ENCODE measurements at regions of chr1 and their contacts with region 1.

Region 1: GRCh38 chr1:108617008-108617723 is 43.7 kb downstream of the HENMT1 start:
- DNase-seq: no peak
- ATAC-seq: no peak
- H3K4me3 ChIP-seq: no peak overlapping the region
- H3K4me3 Mint-ChIP-seq: no peak overlapping the region
- H3K27ac ChIP-seq: no peak overlapping the region
- H3K27ac Mint-ChIP-seq: no peak overlapping the region
- H3K4me1 ChIP-seq: no peaks in the 10 kb centered on the region
- H3K4me1 Mint-ChIP-seq: no peaks in the 10 kb centered on the region
- H3K27me3 ChIP-seq: no peaks in the 10 kb centered on the region
- H3K27me3 Mint-ChIP-seq: no peaks in the 10 kb centered on the region

Region 2: DNA sequence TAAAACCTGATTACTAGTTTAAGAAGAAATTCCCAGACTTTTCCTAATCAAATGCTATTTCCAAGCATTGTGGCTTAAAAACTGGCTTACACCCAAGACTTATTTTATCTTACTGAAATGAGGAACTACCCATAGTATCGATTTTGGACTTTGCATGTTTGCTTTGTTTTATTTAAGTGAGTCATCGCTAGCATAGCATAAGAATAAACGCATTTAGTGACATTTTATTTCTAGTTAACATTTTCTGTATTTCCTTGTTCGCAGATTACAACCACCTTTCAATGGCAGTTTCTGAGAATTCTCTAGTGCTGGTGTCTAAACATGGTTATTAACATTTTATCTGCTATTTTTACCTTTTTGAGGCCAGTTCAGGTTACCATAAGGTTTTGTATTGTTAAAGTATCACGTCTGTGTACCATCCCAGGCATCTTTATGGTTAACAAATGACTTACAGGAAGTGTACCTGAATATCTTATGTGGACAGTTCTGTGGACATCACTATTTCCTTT is 32.8 kb before region 1 on chr1:
- CTCF ChIA-PET with region 1: no interaction called
- POLR2A ChIA-PET with region 1: no interaction called
- intact Hi-C with region 1: loop called in 1 of 2 experiments (anchors 5 kb)
- DNase-seq: no peak
- ATAC-seq: no peak
- H3K4me3 ChIP-seq: no peak overlapping the region
- H3K4me3 Mint-ChIP-seq: no peak overlapping the region
- H3K27ac ChIP-seq: no peak overlapping the region
- H3K27ac Mint-ChIP-seq: no peak overlapping the region
- H3K4me1 ChIP-seq: no peaks in the 10 kb centered on the region
- H3K4me1 Mint-ChIP-seq: peaks cover 3 to 49% (median 33%) of the 10 kb centered on the region in 7 donors
- H3K27me3 ChIP-seq: no peaks in the 10 kb centered on the region
- H3K27me3 Mint-ChIP-seq: no peaks in the 10 kb centered on the region

Region 3: GRCh38 chr1:108636876-108637275 is 19.7 kb after region 1 on chr1:
- CTCF ChIA-PET with region 1: no interaction called
- POLR2A ChIA-PET with region 1: no interaction called
- intact Hi-C with region 1: no loop called
- DNase-seq: no peak
- ATAC-seq: no peak
- H3K4me3 ChIP-seq: no peak overlapping the region
- H3K4me3 Mint-ChIP-seq: no peak overlapping the region
- H3K27ac ChIP-seq: no peak overlapping the region
- H3K27ac Mint-ChIP-seq: no peak overlapping the region
- H3K4me1 ChIP-seq: no peaks in the 10 kb centered on the region
- H3K4me1 Mint-ChIP-seq: peaks cover 7 to 17% (median 16%) of the 10 kb centered on the region in 7 donors
- H3K27me3 ChIP-seq: no peaks in the 10 kb centered on the region
- H3K27me3 Mint-ChIP-seq: no peaks in the 10 kb centered on the region

Region 4: GRCh38 chr1:108657356-108658080 is 40.4 kb after region 1 on chr1:
- CTCF ChIA-PET with region 1: no interaction called
- POLR2A ChIA-PET with region 1: no interaction called
- intact Hi-C with region 1: no loop called
- DNase-seq: no peak
- ATAC-seq: no peak
- H3K4me3 ChIP-seq: no peak overlapping the region
- H3K4me3 Mint-ChIP-seq: peak overlapping the region in 1 of 10 donors; percentile 12
- H3K27ac ChIP-seq: no peak overlapping the region
- H3K27ac Mint-ChIP-seq: peak overlapping the region in 2 of 9 donors; percentile 23 to 77
- H3K4me1 ChIP-seq: peaks cover 7 to 9% of the 10 kb centered on the region in 2 donors
- H3K4me1 Mint-ChIP-seq: peaks cover 11 to 46% (median 28%) of the 10 kb centered on the region in 7 donors
- H3K27me3 ChIP-seq: no peaks in the 10 kb centered on the region
- H3K27me3 Mint-ChIP-seq: no peaks in the 10 kb centered on the region

Region 5: GRCh38 chr1:108670131-108670773 is 53.1 kb after region 1 on chr1:
- CTCF ChIA-PET with region 1: no interaction called
- POLR2A ChIA-PET with region 1: no interaction called
- intact Hi-C with region 1: no loop called
- DNase-seq: no peak
- ATAC-seq: no peak
- H3K4me3 ChIP-seq: no peak overlapping the region
- H3K4me3 Mint-ChIP-seq: no peak overlapping the region
- H3K27ac ChIP-seq: no peak overlapping the region
- H3K27ac Mint-ChIP-seq: peak overlapping the region in 1 of 9 donors; percentile 31
- H3K4me1 ChIP-seq: no peaks in the 10 kb centered on the region
- H3K4me1 Mint-ChIP-seq: peaks cover 0 to 11% (median 0%) of the 10 kb centered on the region in 7 donors
- H3K27me3 ChIP-seq: no peaks in the 10 kb centered on the region
- H3K27me3 Mint-ChIP-seq: peaks cover 3 to 16% (median 9%) of the 10 kb centered on the region in 5 donors

Region 6: DNA sequence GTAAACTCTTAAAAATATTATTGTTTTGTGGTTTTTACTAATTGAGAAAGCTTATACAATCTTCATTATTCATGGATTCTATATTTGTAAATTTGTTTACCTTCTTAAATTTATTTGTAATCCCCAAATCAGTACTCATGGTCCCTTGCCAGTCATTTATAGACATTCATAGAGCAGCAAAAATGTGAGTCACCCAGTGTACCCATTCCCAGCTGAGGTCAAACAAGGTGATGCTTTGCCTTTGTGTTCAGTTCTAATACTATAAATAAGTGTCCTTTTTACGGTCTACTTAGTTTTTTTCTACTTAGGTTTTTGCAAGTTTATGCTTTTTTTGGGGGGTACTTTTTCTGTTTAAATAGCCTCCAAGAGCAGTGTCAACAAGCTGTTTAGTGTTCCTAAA is 744.5 kb after region 1 on chr1:
- CTCF ChIA-PET with region 1: no interaction called
- POLR2A ChIA-PET with region 1: no interaction called
- intact Hi-C with region 1: no loop called
- DNase-seq: no peak
- ATAC-seq: no peak
- H3K4me3 ChIP-seq: no peak overlapping the region
- H3K4me3 Mint-ChIP-seq: no peak overlapping the region
- H3K27ac ChIP-seq: no peak overlapping the region
- H3K27ac Mint-ChIP-seq: no peak overlapping the region
- H3K4me1 ChIP-seq: no peaks in the 10 kb centered on the region
- H3K4me1 Mint-ChIP-seq: peaks cover 0 to 4% (median 0%) of the 10 kb centered on the region in 7 donors
- H3K27me3 ChIP-seq: no peaks in the 10 kb centered on the region
- H3K27me3 Mint-ChIP-seq: peaks cover 14 to 71% (median 16%) of the 10 kb centered on the region in 5 donors

Measured in naive thymus-derived CD4-positive, alpha-beta T cell (primary cell).